ENCODE measurements at regions of chr10 and their contacts with region 1.

Region 1: GRCh38 chr10:89431977-89432376 is 17.6 kb downstream of the IFIT5 start:
- DNase-seq: no peak
- ATAC-seq: peak in 5 of 8 donors; percentile 23 to 74 (median 30)
- H3K4me3 ChIP-seq: peak overlapping the region in 1 of 10 donors; percentile 6
- H3K27ac ChIP-seq: peak overlapping the region in 5 of 10 donors; percentile 7 to 36 (median 22)
- H3K4me1 ChIP-seq: peaks cover 0 to 42% (median 6%) of the 10 kb centered on the region in 9 donors
- H3K27me3 ChIP-seq: peaks cover 0 to 4% (median 0%) of the 10 kb centered on the region in 7 donors
- CTCF ChIP-seq: no peak

Region 2: GRCh38 chr10:89296220-89296648 is 135.7 kb before region 1 on chr10:
- intact Hi-C with region 1: no loop called
- DNase-seq: no peak
- ATAC-seq: peak; percentile 43 to 77 (median 65)
- H3K4me3 ChIP-seq: peak overlapping the region in 1 of 10 donors; percentile 9
- H3K27ac ChIP-seq: peak overlapping the region in 7 of 10 donors; percentile 21 to 76 (median 40)
- H3K4me1 ChIP-seq: peaks cover 0 to 42% (median 12%) of the 10 kb centered on the region in 9 donors
- H3K27me3 ChIP-seq: no peaks in the 10 kb centered on the region
- CTCF ChIP-seq: no peak

Region 3: GRCh38 chr10:89373916-89374711 is 57.9 kb before region 1 on chr10:
- intact Hi-C with region 1: no loop called
- DNase-seq: peak; percentile 52 to 92
- ATAC-seq: peak; percentile 94 to 99 (median 98)
- H3K4me3 ChIP-seq: peak overlapping the region in 3 of 10 donors; percentile 12 to 23 (median 13)
- H3K27ac ChIP-seq: peak overlapping the region; percentile 54 to 89 (median 84)
- H3K4me1 ChIP-seq: peaks cover 12 to 38% (median 28%) of the 10 kb centered on the region in 9 donors
- H3K27me3 ChIP-seq: no peaks in the 10 kb centered on the region
- CTCF ChIP-seq: no peak

Region 4: DNA sequence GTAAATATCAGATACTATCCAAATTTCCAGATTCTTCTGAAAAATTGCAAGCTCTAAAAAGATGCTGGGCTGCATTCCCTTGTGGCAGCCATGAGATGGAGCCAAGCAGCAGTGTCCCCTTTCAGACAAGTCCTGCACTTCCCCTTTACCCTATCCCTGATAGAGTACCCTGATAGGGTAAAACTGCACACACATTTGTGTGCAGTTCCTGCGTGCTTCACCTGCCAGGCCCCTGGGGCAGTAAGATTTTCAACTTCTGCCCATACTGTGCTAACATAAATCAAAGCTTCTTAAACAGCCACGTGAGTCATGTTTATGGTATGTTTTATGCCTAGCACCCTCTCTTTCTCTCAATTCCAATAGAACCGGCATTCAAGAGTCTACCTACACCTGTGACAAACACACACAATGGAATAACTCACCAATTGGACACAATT is 34.6 kb after region 1 on chr10:
- intact Hi-C with region 1: loop called in 1 of 10 experiments (anchors 5 kb)
- DNase-seq: peak in 1 of 2 donors; percentile 14
- ATAC-seq: peak in 7 of 8 donors; percentile 59 to 72 (median 63)
- H3K4me3 ChIP-seq: no peak overlapping the region
- H3K27ac ChIP-seq: peak overlapping the region in 1 of 10 donors; percentile 29
- H3K4me1 ChIP-seq: peaks cover 0 to 32% (median 15%) of the 10 kb centered on the region in 9 donors
- H3K27me3 ChIP-seq: no peaks in the 10 kb centered on the region
- CTCF ChIP-seq: peak in 8 of 9 donors; percentile 19 to 57 (median 44)